Activated CD4-positive, alpha-beta T cell treated with anti-CD3 and anti-CD28 coated beads, Interleukin-2, amount 10 ng/mL, durations not matched to agents 24 days and 14 days (primary cell): ENCODE measurements at regions of chr6 and their contacts with region 1.

Region 1: DNA sequence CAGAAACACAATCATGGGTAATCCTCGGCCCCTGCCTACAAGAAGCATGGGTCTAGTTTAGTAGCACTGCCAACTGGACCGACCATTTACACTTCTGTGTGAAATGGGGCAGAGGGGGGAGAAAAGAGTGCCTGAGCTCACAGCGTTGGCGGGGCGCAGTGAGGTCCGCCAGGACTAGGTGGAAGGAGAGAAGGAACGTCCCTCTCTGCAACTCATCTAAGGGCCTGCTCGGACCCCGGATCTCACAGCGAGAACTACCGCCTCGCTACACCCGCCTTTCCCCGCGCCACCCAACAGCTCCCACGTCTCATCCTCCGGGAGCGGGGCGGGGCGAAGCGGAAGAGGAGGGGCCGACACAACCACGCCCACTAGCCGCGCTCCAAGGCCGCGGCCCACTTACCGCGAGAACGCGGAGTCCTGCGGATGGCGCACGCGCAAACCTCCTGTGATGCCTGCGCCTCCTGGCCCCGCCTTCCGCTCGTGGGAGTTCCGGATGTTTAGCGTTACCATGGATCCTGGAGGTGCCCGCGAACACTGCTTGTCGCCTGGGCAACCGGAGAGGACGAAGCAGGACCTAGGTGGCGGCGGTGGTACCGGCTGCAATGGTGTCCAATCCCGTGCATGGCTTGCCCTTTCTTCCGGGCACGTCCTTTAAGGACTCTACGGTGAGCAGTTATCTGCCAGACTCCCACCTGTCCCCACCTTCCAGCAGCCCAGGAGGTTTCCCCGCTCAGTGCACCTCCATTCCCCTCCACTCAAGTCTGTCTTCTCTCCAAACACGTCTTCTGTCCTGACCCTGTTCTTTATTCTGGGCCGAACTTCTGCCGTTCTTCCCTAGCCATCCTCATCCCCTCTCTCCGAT is at the start of gene EFHC1:
- DNase-seq: peak; percentile 100
- H3K4me3 Mint-ChIP-seq: no peak within 1 kb of the TSS
- H3K27ac Mint-ChIP-seq: no peak within 1 kb of the TSS
- H3K4me1 Mint-ChIP-seq: peaks cover 23% of the 10 kb centered on the region
- H3K27me3 Mint-ChIP-seq: peaks cover 11% of the 10 kb centered on the region
- total RNA-seq, gene EFHC1: 1.5 and 1.7 TPM in 2 replicates

Region 2: GRCh38 chr6:52399511-52400312 is 20.3 kb before region 1 on chr6:
- intact Hi-C with region 1: loop called (anchors 2 kb)
- DNase-seq: peak; percentile 83
- H3K4me3 Mint-ChIP-seq: no peak overlapping the region
- H3K27ac Mint-ChIP-seq: no peak overlapping the region
- H3K4me1 Mint-ChIP-seq: peaks cover 45% of the 10 kb centered on the region
- H3K27me3 Mint-ChIP-seq: no peaks in the 10 kb centered on the region

Region 3: DNA sequence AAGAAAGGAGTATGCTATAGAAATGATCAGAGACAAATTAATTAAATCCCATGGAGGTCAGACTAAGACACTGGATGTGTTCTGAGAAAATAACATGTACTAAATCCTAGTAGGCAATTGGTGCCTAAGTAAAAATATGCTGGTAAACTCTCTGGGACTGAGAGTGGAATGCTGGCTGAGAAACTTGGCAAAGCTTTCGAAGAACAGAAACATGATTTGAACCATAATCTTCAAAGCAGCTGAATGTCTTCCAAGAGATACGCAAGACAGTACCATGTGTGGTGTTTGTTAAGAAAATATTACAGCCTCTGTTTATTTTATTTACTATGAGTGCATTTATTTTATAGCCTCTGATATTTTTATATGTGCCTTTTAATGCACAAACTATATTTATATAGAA is 55.3 kb after region 1 on chr6:
- intact Hi-C with region 1: no loop called
- DNase-seq: no peak
- H3K4me3 Mint-ChIP-seq: no peak overlapping the region
- H3K27ac Mint-ChIP-seq: no peak overlapping the region
- H3K4me1 Mint-ChIP-seq: no peaks in the 10 kb centered on the region
- H3K27me3 Mint-ChIP-seq: peaks cover 9% of the 10 kb centered on the region

Region 4: DNA sequence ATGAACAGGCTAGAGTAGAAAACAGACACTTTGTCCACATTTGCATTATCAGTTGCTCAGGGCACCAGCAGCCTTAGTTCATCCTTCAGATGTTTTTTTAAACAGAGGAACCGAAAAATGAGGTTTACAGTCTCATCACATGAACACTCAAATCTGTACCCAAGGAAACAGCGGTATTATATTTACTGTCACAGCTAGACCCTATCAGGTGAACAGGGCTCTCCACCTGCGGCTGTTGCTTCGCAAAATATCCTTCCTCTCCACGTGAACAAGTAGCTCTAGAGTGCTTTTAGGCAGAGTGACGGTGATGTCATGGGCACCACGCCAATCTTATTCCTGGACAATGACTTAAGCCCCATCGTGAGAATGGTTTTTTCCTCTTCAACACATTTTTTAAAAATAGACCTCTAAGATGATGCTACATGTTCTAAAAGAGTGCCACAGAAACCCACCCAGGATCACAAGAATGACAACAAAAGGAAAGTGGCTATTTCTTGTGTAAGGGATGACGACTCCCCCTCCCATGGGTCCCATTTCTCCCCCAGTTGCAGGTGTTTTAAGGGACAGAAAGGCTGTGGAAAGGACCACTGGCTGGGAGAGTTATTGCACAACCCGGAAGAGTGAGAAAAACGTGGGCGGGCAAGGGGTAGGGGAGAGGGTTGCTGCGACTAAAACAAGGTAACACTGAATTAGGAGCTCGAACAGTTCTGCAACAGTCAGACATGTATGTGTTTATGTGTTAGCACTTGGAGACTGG is 77.8 kb after region 1 on chr6:
- intact Hi-C with region 1: no loop called
- DNase-seq: no peak
- H3K4me3 Mint-ChIP-seq: no peak overlapping the region
- H3K27ac Mint-ChIP-seq: no peak overlapping the region
- H3K4me1 Mint-ChIP-seq: peaks cover 9% of the 10 kb centered on the region
- H3K27me3 Mint-ChIP-seq: no peaks in the 10 kb centered on the region

Region 5: DNA sequence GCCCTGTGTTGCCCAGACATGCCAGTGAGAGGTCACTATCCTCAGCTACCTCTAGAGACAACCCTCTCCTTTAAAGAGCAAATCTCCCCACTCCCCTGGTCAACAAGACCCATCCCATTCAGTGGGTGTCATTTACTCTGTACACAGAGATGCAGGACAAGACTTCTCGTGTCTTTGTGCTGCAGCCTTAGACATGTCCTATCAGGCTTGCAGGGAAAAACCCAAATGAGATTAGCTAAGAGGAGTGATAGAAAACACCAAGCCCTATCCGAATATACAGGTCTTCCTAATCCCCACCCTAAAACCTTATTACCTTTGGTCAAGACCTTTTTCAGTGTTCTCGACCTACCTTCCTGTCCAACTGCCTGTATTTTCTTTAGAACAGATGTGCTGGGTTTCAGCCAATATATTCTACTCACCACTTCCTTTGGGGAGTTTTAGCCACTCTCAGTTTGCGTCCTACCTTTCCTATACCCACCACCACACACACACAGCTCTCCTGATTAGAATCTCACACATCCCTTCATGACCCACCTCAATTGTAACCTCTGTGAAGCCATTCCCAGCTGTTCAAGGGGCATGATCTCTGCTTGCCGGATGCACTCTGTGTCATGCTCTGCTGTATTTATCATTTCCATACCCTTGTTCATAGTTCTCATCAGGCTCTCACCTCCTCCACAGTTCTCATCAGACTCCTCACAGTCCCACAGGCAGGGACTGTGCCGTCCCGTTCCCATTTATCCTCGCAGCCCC is 117.1 kb after region 1 on chr6:
- intact Hi-C with region 1: loop called (anchors 1 kb)
- DNase-seq: peak; percentile 63
- H3K4me3 Mint-ChIP-seq: peak overlapping the region; percentile 7
- H3K27ac Mint-ChIP-seq: peak overlapping the region; percentile 36
- H3K4me1 Mint-ChIP-seq: peaks cover 34% of the 10 kb centered on the region
- H3K27me3 Mint-ChIP-seq: no peaks in the 10 kb centered on the region

Region 6: GRCh38 chr6:52577022-52577777 is 157.2 kb after region 1 on chr6 and contains the start of gene TRAM2:
- intact Hi-C with region 1: loop called (anchors 1 kb)
- DNase-seq: peak; percentile 94
- H3K4me3 Mint-ChIP-seq: peak within 1 kb of the TSS; percentile 81
- H3K27ac Mint-ChIP-seq: peak within 1 kb of the TSS; percentile 71
- H3K4me1 Mint-ChIP-seq: peaks cover 30% of the 10 kb centered on the region
- H3K27me3 Mint-ChIP-seq: peaks cover 13% of the 10 kb centered on the region
- total RNA-seq, gene TRAM2: 2.6 TPM in 2 replicates

Region 7: GRCh38 chr6:52598123-52598823 is 178.2 kb after region 1 on chr6:
- intact Hi-C with region 1: loop called (anchors 2 kb)
- DNase-seq: peak; percentile 65
- H3K4me3 Mint-ChIP-seq: no peak overlapping the region
- H3K27ac Mint-ChIP-seq: no peak overlapping the region
- H3K4me1 Mint-ChIP-seq: peaks cover 11% of the 10 kb centered on the region
- H3K27me3 Mint-ChIP-seq: peaks cover 6% of the 10 kb centered on the region

Region 8: DNA sequence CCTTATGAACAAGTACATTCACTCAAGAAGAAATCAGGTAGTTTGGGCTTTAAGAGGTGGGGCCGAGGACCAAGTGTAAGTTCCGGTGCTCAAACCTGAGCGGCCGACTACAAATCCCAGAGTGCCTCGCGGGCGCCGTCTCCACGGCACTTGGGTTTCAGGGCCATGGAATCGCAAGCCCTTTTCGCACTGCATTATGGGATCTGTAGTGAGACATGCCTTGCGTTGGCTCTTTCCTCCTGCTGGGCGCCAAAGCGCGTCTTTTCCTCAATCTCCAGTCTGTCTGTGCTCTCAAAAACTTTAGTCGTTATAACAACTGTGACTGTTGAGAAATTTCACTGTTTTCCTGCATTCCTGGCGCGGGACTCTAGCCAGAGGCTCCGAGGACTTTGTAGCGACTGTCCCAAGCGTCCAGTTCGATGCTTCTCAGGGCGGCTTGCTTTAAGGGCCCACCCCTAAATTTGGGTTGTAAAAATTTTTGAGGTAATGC is 644.7 kb after region 1 on chr6:
- intact Hi-C with region 1: loop called (anchors 1 kb)
- DNase-seq: peak; percentile 98
- H3K4me3 Mint-ChIP-seq: peak overlapping the region; percentile 100
- H3K27ac Mint-ChIP-seq: peak overlapping the region; percentile 100
- H3K4me1 Mint-ChIP-seq: peaks cover 46% of the 10 kb centered on the region
- H3K27me3 Mint-ChIP-seq: no peaks in the 10 kb centered on the region